Panc1 (cell line): ENCODE measurements at regions of chr1 and their contacts with region 1.

Region 1: DNA sequence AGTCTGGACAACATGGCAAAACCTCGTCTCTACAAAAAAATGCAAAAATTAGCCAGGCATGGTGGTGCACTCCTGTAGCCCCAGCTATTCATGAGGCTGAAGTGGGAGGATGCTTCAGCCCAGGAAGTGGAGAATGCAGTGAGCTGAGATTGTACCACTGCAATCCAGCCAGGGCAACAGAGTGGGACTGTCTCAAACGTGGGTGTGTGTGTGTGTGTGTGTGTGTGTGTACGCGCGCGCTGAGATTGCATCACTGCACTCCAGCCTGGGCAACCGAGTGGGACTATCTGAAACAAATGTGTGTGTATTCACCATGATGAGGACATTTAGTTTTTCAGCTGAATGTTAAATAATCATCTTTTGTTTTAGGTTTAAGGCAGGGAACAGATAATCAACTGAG is 21.1 kb downstream of the USP1 start:
- DNase-seq: no peak
- ATAC-seq: no peak
- H3K4me3 ChIP-seq: no peak overlapping the region
- H3K27ac ChIP-seq: no peak overlapping the region
- H3K4me1 ChIP-seq: no peaks in the 10 kb centered on the region
- H3K27me3 ChIP-seq: no peaks in the 10 kb centered on the region
- CTCF ChIP-seq: no peak

Region 2: DNA sequence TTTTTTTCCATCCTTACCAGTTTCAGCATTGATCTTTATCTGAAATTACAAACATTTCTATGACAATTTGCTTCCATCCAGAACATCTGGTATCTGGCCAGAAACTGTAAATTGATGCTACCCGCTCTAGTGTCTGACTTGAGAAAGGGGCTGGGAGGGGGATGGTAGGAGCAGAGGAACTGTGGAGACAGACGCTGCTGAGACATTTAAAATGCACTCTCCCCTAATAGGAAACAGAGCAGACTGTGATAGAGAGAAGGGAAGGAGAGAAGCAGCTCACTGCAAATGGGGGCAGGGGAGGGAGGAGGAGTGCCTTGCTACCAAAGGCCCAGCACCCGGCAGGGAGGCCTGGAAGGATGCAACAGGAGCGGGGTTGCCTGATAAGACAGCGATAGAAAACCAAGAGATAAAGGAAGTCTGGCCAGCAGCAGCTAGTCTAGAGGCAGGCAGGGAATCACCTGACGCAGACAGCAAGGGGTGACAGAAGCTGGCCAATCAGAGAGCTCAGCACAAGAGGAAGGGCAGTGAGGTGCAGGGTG is 1571.1 kb before region 1 on chr1:
- CTCF ChIA-PET with region 1: interaction called, 16 read pairs
- POLR2A ChIA-PET with region 1: no interaction called
- in situ Hi-C with region 1: no loop called
- intact Hi-C with region 1: no loop called
- DNase-seq: no peak
- ATAC-seq: no peak
- H3K4me3 ChIP-seq: no peak overlapping the region
- H3K27ac ChIP-seq: no peak overlapping the region
- H3K4me1 ChIP-seq: no peaks in the 10 kb centered on the region
- H3K27me3 ChIP-seq: peaks cover 8% of the 10 kb centered on the region
- CTCF ChIP-seq: no peak

Region 3: DNA sequence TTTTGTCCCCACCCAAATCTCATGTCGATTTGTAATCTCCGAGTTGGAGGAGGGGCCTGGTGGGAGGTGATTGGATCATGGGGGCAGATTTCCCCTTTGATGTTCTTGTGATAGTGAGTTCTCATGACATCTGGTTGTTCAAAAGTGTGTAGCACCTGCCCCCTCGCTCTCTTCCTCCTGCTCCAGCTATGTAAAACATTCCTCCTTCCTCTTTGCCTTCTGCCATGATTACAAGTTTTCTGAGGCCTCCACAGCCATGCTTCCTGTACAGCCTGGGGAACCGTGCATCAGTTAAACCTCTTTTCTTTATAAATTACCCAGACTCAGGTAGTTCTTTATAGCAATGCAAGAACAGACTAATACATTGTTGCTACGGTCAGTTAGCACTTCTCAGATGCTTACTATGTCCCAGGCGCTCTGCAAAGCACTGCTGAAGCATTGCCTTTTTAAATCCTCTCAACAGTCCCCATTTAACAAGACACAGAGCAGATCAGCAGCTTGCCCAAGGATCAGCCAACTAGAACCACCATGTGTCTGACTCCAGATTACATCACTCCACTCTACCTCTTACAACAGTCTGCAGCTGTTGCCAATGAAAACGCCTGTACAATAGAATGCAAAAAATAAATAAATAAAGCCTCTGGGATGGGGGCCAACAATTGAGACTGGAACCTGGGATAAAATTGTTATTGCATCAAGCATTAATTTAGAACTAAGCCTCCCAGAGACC is 73.5 kb before region 1 on chr1:
- CTCF ChIA-PET with region 1: no interaction called
- POLR2A ChIA-PET with region 1: no interaction called
- in situ Hi-C with region 1: no loop called
- intact Hi-C with region 1: no loop called
- DNase-seq: no peak
- ATAC-seq: no peak
- H3K4me3 ChIP-seq: no peak overlapping the region
- H3K27ac ChIP-seq: no peak overlapping the region
- H3K4me1 ChIP-seq: no peaks in the 10 kb centered on the region
- H3K27me3 ChIP-seq: no peaks in the 10 kb centered on the region
- CTCF ChIP-seq: no peak

Region 4: GRCh38 chr1:62573675-62574074 is 115.7 kb after region 1 on chr1:
- CTCF ChIA-PET with region 1: no interaction called
- POLR2A ChIA-PET with region 1: no interaction called
- in situ Hi-C with region 1: no loop called
- intact Hi-C with region 1: no loop called
- DNase-seq: no peak
- ATAC-seq: no peak
- H3K4me3 ChIP-seq: no peak overlapping the region
- H3K27ac ChIP-seq: no peak overlapping the region
- H3K4me1 ChIP-seq: no peaks in the 10 kb centered on the region
- H3K27me3 ChIP-seq: no peaks in the 10 kb centered on the region
- CTCF ChIP-seq: no peak